ENCODE measurements at regions of chr16 and their contacts with region 1.

Region 1: DNA sequence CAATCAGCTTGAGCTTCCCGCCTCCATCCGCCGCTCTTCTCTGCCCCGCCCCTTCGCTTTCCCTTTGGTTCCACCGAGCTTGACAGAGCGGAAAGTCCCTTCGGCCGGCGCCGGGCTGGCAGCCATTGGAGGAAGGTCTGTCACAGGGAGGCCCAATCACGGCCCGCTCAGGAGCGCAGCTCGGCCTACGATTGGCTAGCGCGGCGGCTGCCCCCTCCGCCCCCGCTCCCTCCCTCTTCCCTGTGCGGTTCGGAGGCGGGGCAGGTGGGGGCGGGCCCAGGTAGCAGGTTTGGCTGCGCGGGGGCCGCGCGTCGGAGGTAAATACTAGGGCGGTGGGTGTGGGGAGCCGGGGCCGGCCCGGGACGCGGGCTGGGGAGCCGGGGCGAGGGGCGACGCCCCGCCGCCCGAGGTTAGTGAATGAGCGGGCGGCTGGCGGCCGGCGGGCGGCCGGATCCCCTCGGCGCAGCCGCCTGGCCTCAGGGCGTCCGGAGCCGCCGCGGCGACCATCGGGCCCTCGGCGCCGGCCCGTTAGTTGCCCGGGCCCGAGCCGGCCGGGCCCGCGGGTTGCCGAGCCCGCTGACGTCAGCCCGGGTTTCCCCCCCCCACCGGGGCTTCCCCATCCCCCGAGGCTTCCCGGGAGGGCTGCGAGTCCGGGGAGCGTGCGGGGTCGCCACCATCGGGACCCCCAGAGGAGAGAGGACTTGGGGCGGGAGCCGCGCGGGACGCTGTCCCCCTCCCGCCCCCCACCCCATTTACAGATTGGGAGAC is at the start of gene CYLD:
- DNase-seq: peak; percentile 99
- H3K4me3 Mint-ChIP-seq: peak within 1 kb of the TSS; percentile 78
- H3K27ac Mint-ChIP-seq: peak within 1 kb of the TSS; percentile 87
- H3K4me1 Mint-ChIP-seq: peaks cover 25% of the 10 kb centered on the region
- H3K27me3 Mint-ChIP-seq: peaks cover 29% of the 10 kb centered on the region
- CTCF ChIP-seq: no peak
- total RNA-seq, gene CYLD: 29.2 and 31.8 TPM in 2 replicates

Region 2: GRCh38 chr16:50709053-50709684 is 32.8 kb before region 1 on chr16:
- CTCF ChIA-PET with region 1: no interaction called
- intact Hi-C with region 1: no loop called
- DNase-seq: no peak
- H3K4me3 Mint-ChIP-seq: no peak overlapping the region
- H3K27ac Mint-ChIP-seq: no peak overlapping the region
- H3K4me1 Mint-ChIP-seq: peaks cover 21% of the 10 kb centered on the region
- H3K27me3 Mint-ChIP-seq: no peaks in the 10 kb centered on the region
- CTCF ChIP-seq: no peak

Region 3: DNA sequence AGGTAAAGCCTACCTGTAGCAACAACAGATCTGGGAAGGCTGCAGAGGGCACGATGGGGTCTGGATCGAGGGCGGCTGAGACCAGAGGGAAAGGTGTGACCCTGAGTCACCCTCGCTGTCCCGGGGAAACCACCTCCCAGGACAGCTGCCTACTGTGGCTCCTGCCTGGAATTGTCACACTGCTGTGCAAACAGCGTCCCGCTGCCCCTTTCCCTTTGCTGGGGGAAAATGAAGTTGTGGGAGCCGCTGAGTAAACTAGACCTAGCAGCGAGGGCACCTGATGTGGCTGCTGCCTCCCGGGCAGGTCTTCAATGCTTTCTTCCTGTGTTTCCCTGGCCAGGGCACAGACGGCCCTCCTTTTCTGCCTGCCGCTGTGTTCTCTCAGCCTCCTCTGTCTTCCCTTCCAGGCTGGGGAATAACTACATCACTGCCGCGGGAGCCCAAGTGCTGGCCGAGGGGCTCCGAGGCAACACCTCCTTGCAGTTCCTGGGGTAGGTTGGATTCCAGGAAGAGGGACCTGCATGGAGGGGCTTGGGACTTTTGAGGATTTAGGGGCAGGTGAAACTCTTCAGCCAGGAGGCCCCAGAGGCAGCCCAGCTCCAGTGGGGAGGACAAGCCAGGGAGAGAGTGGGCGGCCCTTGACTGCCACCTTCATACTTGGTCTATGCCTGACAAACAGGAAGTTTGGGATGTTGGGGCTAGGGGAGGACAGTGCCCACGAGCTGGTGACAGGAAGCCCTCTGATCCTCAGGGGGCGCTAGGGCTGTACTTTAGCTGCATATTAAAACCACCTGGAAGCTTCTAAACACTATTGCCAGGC is 22.3 kb before region 1 on chr16:
- CTCF ChIA-PET with region 1: interaction called, 6 read pairs
- intact Hi-C with region 1: loop called (anchors 2 kb)
- DNase-seq: peak; percentile 74
- H3K4me3 Mint-ChIP-seq: peak overlapping the region; percentile 39
- H3K27ac Mint-ChIP-seq: peak overlapping the region; percentile 57
- H3K4me1 Mint-ChIP-seq: peaks cover 48% of the 10 kb centered on the region
- H3K27me3 Mint-ChIP-seq: no peaks in the 10 kb centered on the region
- CTCF ChIP-seq: no peak

Region 4: GRCh38 chr16:50848755-50849514 is 106.9 kb after region 1 on chr16:
- CTCF ChIA-PET with region 1: no interaction called
- intact Hi-C with region 1: no loop called
- DNase-seq: no peak
- H3K4me3 Mint-ChIP-seq: no peak overlapping the region
- H3K27ac Mint-ChIP-seq: no peak overlapping the region
- H3K4me1 Mint-ChIP-seq: no peaks in the 10 kb centered on the region
- H3K27me3 Mint-ChIP-seq: peaks cover 47% of the 10 kb centered on the region
- CTCF ChIP-seq: no peak

Region 5: GRCh38 chr16:50887500-50888298 is 145.7 kb after region 1 on chr16:
- CTCF ChIA-PET with region 1: no interaction called
- intact Hi-C with region 1: no loop called
- DNase-seq: no peak
- H3K4me3 Mint-ChIP-seq: no peak overlapping the region
- H3K27ac Mint-ChIP-seq: no peak overlapping the region
- H3K4me1 Mint-ChIP-seq: no peaks in the 10 kb centered on the region
- H3K27me3 Mint-ChIP-seq: peaks cover 95% of the 10 kb centered on the region
- CTCF ChIP-seq: no peak